GM10248 (cell line): ENCODE measurements at regions of chr13 and their contacts with region 1.

Region 1: DNA sequence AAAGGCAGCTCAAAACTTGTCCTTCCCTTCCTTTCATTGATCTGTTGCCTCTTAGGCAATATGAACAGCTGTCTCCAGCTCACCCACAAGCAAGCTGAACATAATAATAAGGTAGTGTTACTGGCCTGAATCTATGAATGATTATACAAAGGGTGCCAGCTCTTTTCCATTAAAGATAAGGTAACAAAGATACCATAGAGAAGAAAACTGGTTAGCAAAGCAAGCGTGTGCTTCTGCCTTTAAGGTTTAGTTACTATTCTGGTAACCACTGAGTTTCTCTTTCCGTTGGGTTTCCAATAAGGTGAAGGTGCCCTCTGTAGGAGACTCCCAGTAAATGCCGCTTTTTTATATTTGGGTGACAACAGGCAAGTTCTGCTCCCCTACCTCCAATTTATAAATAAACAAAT is 12.1 kb upstream of the DACH1 start:
- DNase-seq: peak; percentile 22
- CTCF ChIP-seq: peak; percentile 51

Region 2: DNA sequence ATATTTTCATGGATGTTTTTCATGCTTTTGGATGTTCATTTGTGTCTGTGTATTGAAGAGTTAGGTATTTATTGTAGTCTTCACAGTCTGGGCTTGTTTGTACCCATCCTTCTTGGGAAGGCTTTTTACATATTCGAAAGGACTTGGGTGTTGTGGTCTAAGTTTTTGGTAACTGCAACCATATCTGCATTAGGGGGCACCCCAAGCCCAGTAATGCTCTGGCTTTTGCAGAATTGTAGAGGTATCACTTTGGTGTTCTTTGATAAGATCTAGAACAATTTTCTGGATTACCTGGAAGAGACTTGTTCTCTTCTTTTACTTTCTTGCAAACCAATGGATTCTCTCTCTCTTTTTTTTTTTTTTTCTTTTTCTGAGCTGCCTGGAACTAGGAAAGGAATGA is 593.4 kb before region 1 on chr13:
- CTCF ChIA-PET with region 1: interaction called, 10 read pairs
- POLR2A ChIA-PET with region 1: no interaction called
- DNase-seq: no peak
- CTCF ChIP-seq: peak; percentile 22

Region 3: GRCh38 chr13:71867131-71867814 is 11.9 kb before region 1 on chr13 and contains the start of gene DACH1:
- CTCF ChIA-PET with region 1: interaction called, 15 read pairs
- POLR2A ChIA-PET with region 1: no interaction called
- DNase-seq: peak; percentile 38
- CTCF ChIP-seq: no peak